Activated CD8-positive, alpha-beta T cell treated with anti-CD3 and anti-CD28 coated beads for 36 hours (primary cell): ENCODE measurements at regions of chr1 and their contacts with region 1.

Region 1: GRCh38 chr1:155167166-155168104 is 5.7 kb downstream of the KRTCAP2 start:
- DNase-seq: peak; percentile 94
- ATAC-seq: peak; percentile 82
- H3K4me3 Mint-ChIP-seq: peak overlapping the region; percentile 50
- H3K27ac Mint-ChIP-seq: no peak overlapping the region
- H3K4me1 Mint-ChIP-seq: peaks cover 25% of the 10 kb centered on the region
- H3K27me3 Mint-ChIP-seq: no peaks in the 10 kb centered on the region
- CTCF ChIP-seq: peak; percentile 90

Region 2: GRCh38 chr1:154784924-154785531 is 382.4 kb before region 1 on chr1:
- CTCF ChIA-PET with region 1: no interaction called
- POLR2A ChIA-PET with region 1: no interaction called
- intact Hi-C with region 1: no loop called
- DNase-seq: peak; percentile 77
- ATAC-seq: peak; percentile 93
- H3K4me3 Mint-ChIP-seq: peak overlapping the region; percentile 13
- H3K27ac Mint-ChIP-seq: peak overlapping the region; percentile 92
- H3K4me1 Mint-ChIP-seq: peaks cover 35% of the 10 kb centered on the region
- H3K27me3 Mint-ChIP-seq: no peaks in the 10 kb centered on the region
- CTCF ChIP-seq: no peak

Region 3: GRCh38 chr1:155105604-155106022 is 61.8 kb before region 1 on chr1:
- CTCF ChIA-PET with region 1: interaction called, 7 read pairs
- POLR2A ChIA-PET with region 1: no interaction called
- intact Hi-C with region 1: loop called (anchors 5 kb)
- DNase-seq: no peak
- ATAC-seq: no peak
- H3K4me3 Mint-ChIP-seq: no peak overlapping the region
- H3K27ac Mint-ChIP-seq: no peak overlapping the region
- H3K4me1 Mint-ChIP-seq: no peaks in the 10 kb centered on the region
- H3K27me3 Mint-ChIP-seq: no peaks in the 10 kb centered on the region
- CTCF ChIP-seq: no peak

Region 4: GRCh38 chr1:155127105-155127964 is 40.1 kb before region 1 on chr1 and contains the start of gene EFNA1:
- CTCF ChIA-PET with region 1: interaction called, 69 read pairs
- POLR2A ChIA-PET with region 1: no interaction called
- intact Hi-C with region 1: no loop called
- DNase-seq: peak; percentile 43
- ATAC-seq: peak; percentile 59
- H3K4me3 Mint-ChIP-seq: peak within 1 kb of the TSS; percentile 73
- H3K27ac Mint-ChIP-seq: peak within 1 kb of the TSS; percentile 34
- H3K4me1 Mint-ChIP-seq: peaks cover 34% of the 10 kb centered on the region
- H3K27me3 Mint-ChIP-seq: peaks cover 21% of the 10 kb centered on the region
- CTCF ChIP-seq: no peak
- total RNA-seq, gene EFNA1: 0.59 to 0.60 TPM

Region 5: GRCh38 chr1:155145491-155145890 is 21.9 kb before region 1 on chr1:
- CTCF ChIA-PET with region 1: interaction called, 69 read pairs
- POLR2A ChIA-PET with region 1: interaction called, 4 read pairs
- intact Hi-C with region 1: no loop called
- DNase-seq: no peak
- ATAC-seq: no peak
- H3K4me3 Mint-ChIP-seq: no peak overlapping the region
- H3K27ac Mint-ChIP-seq: no peak overlapping the region
- H3K4me1 Mint-ChIP-seq: peaks cover 7% of the 10 kb centered on the region
- H3K27me3 Mint-ChIP-seq: peaks cover 7% of the 10 kb centered on the region
- CTCF ChIP-seq: no peak